Mammary epithelial cell (primary cell): ENCODE measurements at regions of chr1 and their contacts with region 1.

Region 1: GRCh38 chr1:110524311-110525251 is 5.6 kb upstream of the KCNA10 start:
- DNase-seq: peak; percentile 41
- H3K4me3 ChIP-seq: no peak overlapping the region
- H3K27ac ChIP-seq: no peak overlapping the region
- H3K4me1 ChIP-seq: no peaks in the 10 kb centered on the region
- H3K27me3 ChIP-seq: peaks cover 2% of the 10 kb centered on the region
- CTCF ChIP-seq: peak; percentile 64 to 81

Region 2: GRCh38 chr1:110594456-110595352 is 70.1 kb after region 1 on chr1:
- CTCF ChIA-PET with region 1: no interaction called
- dilution Hi-C with region 1: no loop called
- in situ Hi-C with region 1: no loop called
- intact Hi-C with region 1: no loop called
- DNase-seq: no peak
- H3K4me3 ChIP-seq: no peak overlapping the region
- H3K27ac ChIP-seq: no peak overlapping the region
- H3K4me1 ChIP-seq: no peaks in the 10 kb centered on the region
- H3K27me3 ChIP-seq: peaks cover 7% of the 10 kb centered on the region
- CTCF ChIP-seq: no peak

Region 3: GRCh38 chr1:110612065-110612751 is 87.6 kb after region 1 on chr1:
- CTCF ChIA-PET with region 1: interaction called, 3 read pairs
- dilution Hi-C with region 1: no loop called
- in situ Hi-C with region 1: loop called in 1 of 2 experiments (anchors 5 kb)
- intact Hi-C with region 1: loop called (anchors 1 kb)
- DNase-seq: no peak
- H3K4me3 ChIP-seq: no peak overlapping the region
- H3K27ac ChIP-seq: no peak overlapping the region
- H3K4me1 ChIP-seq: no peaks in the 10 kb centered on the region
- H3K27me3 ChIP-seq: peaks cover 25% of the 10 kb centered on the region
- CTCF ChIP-seq: no peak

Region 4: DNA sequence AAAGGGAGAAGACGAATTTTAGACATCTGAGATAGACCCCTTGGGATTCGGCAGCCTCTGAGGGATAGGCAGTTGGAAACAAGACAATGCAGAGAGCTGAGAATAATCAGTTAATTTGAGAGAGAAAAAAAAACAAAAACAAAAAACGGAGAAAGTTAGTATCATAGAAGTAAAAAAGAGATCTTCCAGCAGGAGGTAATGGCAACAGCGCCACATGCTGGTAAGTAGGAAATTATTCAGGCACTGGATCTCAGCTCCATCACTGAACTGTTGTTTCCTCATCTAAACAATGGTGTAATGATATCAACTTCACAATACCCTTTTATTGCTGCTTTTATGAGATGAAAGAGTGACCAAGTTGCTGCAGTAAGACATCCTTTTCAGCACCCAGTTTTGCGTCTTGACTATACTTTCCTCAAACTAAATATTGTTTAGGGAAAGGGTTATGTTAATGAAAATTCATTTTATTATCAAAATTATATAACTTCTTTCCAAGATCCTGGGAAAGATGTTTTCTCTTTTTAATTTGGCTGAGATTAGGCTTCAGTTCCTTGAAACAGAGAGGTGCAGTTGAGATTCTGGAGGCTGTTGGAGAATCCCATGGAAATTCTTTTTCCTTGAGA is 241.6 kb after region 1 on chr1:
- CTCF ChIA-PET with region 1: no interaction called
- dilution Hi-C with region 1: no loop called
- in situ Hi-C with region 1: no loop called
- intact Hi-C with region 1: loop called (anchors 5 kb)
- DNase-seq: peak; percentile 17
- H3K4me3 ChIP-seq: no peak overlapping the region
- H3K27ac ChIP-seq: no peak overlapping the region
- H3K4me1 ChIP-seq: peaks cover 12% of the 10 kb centered on the region
- H3K27me3 ChIP-seq: no peaks in the 10 kb centered on the region
- CTCF ChIP-seq: peak; percentile 83 to 93